ENCODE measurements at regions of chr20 and their contacts with region 1.

Region 1: GRCh38 chr20:45971675-45972499 is at the start of gene ZNF335:
- DNase-seq: peak; percentile 99
- ATAC-seq: peak; percentile 80
- H3K4me3 ChIP-seq: peak within 1 kb of the TSS; percentile 89 to 99 (median 95)
- H3K4me3 Mint-ChIP-seq: peak within 1 kb of the TSS; percentile 93
- H3K27ac ChIP-seq: peak within 1 kb of the TSS; percentile 99 to 100
- H3K27ac Mint-ChIP-seq: peak within 1 kb of the TSS; percentile 100
- H3K4me1 ChIP-seq: peaks cover 23 to 27% of the 10 kb centered on the region in 2 donors
- H3K4me1 Mint-ChIP-seq: peaks cover 24% of the 10 kb centered on the region
- H3K27me3 ChIP-seq: no peaks in the 10 kb centered on the region
- H3K27me3 Mint-ChIP-seq: no peaks in the 10 kb centered on the region
- CTCF ChIP-seq: no peak
- total RNA-seq, gene ZNF335: 62.7 and 64.8 TPM in 2 replicates

Region 2: DNA sequence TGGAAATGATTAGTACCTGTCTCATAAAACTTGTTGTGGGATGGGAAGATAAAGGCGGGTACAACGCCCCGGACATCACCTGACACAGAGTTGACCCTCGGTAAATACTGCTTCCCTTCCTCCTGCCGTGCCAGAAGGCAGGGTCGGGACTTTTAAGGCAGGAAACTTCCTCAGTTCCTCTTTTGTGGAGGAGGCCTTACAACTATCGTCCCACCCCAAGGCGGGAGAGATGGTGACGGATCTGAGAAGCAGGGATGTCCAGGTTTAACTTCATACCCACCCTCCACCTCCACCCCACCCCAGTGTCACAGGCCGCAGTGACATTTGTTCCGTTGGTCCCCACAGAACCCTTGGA is 179.6 kb before region 1 on chr20:
- CTCF ChIA-PET with region 1: interaction called, 4 read pairs
- POLR2A ChIA-PET with region 1: no interaction called
- intact Hi-C with region 1: loop called (anchors 5 kb)
- DNase-seq: peak; percentile 61
- ATAC-seq: peak; percentile 22
- H3K4me3 ChIP-seq: peak overlapping the region; percentile 72 to 95 (median 89)
- H3K4me3 Mint-ChIP-seq: peak overlapping the region; percentile 90
- H3K27ac ChIP-seq: peak overlapping the region; percentile 75 to 96
- H3K27ac Mint-ChIP-seq: peak overlapping the region; percentile 93
- H3K4me1 ChIP-seq: peaks cover 8 to 13% of the 10 kb centered on the region in 2 donors
- H3K4me1 Mint-ChIP-seq: peaks cover 19% of the 10 kb centered on the region
- H3K27me3 ChIP-seq: no peaks in the 10 kb centered on the region
- H3K27me3 Mint-ChIP-seq: no peaks in the 10 kb centered on the region
- CTCF ChIP-seq: no peak

Region 3: DNA sequence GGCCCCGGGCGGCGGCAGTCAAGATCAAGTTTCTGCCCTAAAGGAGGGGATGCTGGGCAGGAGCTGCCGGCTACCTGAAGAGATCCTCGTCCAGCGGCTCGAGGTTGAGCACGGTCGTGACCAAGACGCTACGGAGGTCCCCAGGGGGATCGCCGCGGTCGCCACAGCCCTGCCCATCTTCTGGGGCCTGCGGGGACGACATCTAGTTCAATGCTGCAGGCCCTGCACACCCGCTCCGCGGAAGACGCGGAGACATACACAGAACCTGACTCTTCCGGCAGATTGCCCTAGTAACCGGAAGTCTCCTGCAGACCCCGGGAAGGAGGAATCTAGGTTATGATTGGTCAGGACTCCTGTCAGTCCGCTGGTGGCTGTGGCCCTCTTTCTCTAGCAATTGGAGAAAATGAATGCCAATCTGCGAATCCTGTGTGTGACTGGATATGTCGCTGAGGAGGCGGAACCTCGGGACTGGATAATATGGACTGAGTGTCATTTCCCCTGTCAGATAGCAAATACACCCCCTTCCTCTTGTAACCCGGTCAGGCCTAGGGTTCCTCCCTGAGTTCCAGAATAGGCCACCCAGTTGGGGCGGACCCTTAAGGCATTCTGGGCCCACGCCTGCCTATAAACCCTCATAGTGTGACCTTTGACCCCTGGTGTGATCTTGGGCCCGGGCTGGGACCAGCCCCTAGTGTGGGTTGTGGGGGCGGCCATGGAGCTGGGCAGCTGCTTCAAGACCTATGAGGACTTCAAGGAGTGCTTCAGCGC is 114.6 kb before region 1 on chr20 and contains the starts of genes ACOT8 and ZSWIM3:
- CTCF ChIA-PET with region 1: interaction called, 4 read pairs
- POLR2A ChIA-PET with region 1: no interaction called
- intact Hi-C with region 1: loop called (anchors 1 kb)
- DNase-seq: peak; percentile 99
- ATAC-seq: peak; percentile 98
- H3K4me3 ChIP-seq: peak within 1 kb of the TSS; percentile 69 to 94 (median 81)
- H3K4me3 Mint-ChIP-seq: peak within 1 kb of the TSS; percentile 93
- H3K27ac ChIP-seq: peak within 1 kb of the TSS; percentile 88
- H3K27ac Mint-ChIP-seq: peak within 1 kb of the TSS; percentile 96
- H3K4me1 ChIP-seq: peaks cover 18 to 29% of the 10 kb centered on the region in 2 donors
- H3K4me1 Mint-ChIP-seq: peaks cover 38% of the 10 kb centered on the region
- H3K27me3 ChIP-seq: no peaks in the 10 kb centered on the region
- H3K27me3 Mint-ChIP-seq: no peaks in the 10 kb centered on the region
- CTCF ChIP-seq: no peak
- total RNA-seq, gene ACOT8: 27.1 and 32.4 TPM in 2 replicates
- total RNA-seq, gene ZSWIM3: 7.1 and 7.8 TPM in 2 replicates

Region 4: GRCh38 chr20:45910670-45911485 is 61.0 kb before region 1 on chr20:
- CTCF ChIA-PET with region 1: no interaction called
- POLR2A ChIA-PET with region 1: interaction called, 4 read pairs
- intact Hi-C with region 1: loop called (anchors 1 kb)
- DNase-seq: peak; percentile 95
- ATAC-seq: peak; percentile 93
- H3K4me3 ChIP-seq: peak overlapping the region in 4 of 5 experiments; percentile 37 to 65 (median 60)
- H3K4me3 Mint-ChIP-seq: peak overlapping the region; percentile 94
- H3K27ac ChIP-seq: no peak overlapping the region
- H3K27ac Mint-ChIP-seq: peak overlapping the region; percentile 28
- H3K4me1 ChIP-seq: peaks cover 14 to 22% of the 10 kb centered on the region in 2 donors
- H3K4me1 Mint-ChIP-seq: peaks cover 20% of the 10 kb centered on the region
- H3K27me3 ChIP-seq: peaks cover 0 to 19% (median 9%) of the 10 kb centered on the region in 4 experiments
- H3K27me3 Mint-ChIP-seq: peaks cover 7% of the 10 kb centered on the region
- CTCF ChIP-seq: no peak

Region 5: DNA sequence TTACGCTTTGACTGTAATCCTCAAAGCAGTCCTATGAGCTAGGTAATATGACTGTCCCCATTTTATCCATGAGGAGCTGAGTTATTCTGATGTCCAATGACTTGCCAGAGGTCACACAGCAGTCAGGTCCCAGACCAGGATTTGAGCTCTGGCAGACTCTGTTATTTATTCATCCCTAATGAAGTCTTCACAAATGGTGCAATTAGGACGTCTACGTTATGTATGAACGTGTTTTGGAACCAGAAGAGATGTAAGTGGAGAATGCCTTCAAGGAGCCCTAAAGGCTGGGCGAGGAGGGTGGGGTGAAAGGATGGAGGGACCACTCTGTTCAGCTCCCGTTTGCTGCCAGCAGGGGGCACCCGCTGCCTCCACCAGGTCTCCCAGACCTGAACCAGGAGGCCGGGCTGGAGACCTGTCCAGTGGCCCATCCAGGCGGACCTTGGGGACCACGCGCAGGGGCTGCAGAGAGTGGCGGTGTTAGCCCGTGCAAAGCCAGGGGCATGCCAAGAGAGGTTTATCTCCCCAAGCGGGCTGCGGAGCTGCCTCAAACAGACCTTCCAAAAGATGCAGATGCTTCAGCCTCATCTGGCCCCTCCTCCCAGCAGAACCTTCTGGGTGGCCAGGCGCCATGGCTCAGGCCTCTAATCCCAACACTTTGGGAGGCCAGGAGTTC is 15.4 kb after region 1 on chr20:
- CTCF ChIA-PET with region 1: interaction called, 59 read pairs
- POLR2A ChIA-PET with region 1: interaction called, 4 read pairs
- intact Hi-C with region 1: no loop called
- DNase-seq: peak; percentile 82
- ATAC-seq: peak; percentile 98
- H3K4me3 ChIP-seq: no peak overlapping the region
- H3K4me3 Mint-ChIP-seq: no peak overlapping the region
- H3K27ac ChIP-seq: no peak overlapping the region
- H3K27ac Mint-ChIP-seq: no peak overlapping the region
- H3K4me1 ChIP-seq: peaks cover 4 to 12% of the 10 kb centered on the region in 2 donors
- H3K4me1 Mint-ChIP-seq: peaks cover 6% of the 10 kb centered on the region
- H3K27me3 ChIP-seq: peaks cover 0 to 27% (median 10%) of the 10 kb centered on the region in 4 experiments
- H3K27me3 Mint-ChIP-seq: peaks cover 20% of the 10 kb centered on the region
- CTCF ChIP-seq: peak; percentile 93

Region 6: DNA sequence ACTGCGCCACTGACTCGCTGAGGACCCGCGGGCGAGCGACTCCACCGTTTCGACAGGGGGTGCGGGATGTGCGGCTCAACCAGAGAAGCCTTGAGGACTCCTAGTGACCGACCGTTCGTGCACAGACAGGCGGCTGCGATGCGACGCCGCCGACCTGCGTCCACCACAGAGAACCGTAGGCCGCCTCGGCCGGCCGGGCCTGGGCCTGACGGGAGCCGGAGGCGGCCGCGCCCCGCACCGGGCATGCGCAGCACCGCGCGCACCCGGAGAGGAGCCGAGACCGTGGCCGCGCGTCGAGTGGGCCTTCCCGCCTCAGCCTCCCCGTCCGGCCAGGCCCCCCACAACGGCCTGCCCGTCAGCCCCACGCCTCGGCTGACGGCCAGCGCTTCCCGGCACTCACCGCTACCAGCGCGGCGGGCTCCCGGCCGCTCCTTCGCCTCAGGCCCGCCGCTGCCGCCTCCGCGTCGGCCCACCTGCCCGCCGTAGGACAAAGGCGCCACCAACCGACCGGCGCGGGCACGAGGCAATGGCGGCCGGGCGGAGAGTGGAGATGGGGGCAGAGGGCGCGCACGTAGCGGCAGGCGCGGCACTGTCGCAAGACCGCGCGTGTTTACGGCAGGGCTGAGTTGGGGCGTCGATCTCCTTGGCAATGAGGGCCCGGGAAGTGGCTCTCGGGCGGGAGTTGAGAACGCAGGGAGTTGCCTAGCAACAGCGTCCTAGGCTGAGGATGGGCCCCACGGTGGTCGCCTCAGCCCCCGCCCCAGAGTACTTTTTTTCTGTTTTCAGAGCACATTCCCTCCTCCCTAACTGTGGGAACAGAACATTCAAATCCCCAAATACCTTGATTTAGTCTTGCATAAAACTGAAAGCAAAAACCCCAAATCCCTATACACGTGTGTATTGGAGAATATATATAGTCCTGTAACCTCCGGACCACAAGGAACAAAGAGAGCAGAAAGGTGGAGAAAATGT is 117.8 kb after region 1 on chr20 and contains the start of gene NCOA5:
- CTCF ChIA-PET with region 1: no interaction called
- POLR2A ChIA-PET with region 1: no interaction called
- intact Hi-C with region 1: loop called (anchors 1 kb)
- DNase-seq: peak; percentile 97
- ATAC-seq: peak; percentile 92
- H3K4me3 ChIP-seq: peak within 1 kb of the TSS; percentile 71 to 86 (median 81)
- H3K4me3 Mint-ChIP-seq: peak within 1 kb of the TSS; percentile 93
- H3K27ac ChIP-seq: peak within 1 kb of the TSS; percentile 71 to 94
- H3K27ac Mint-ChIP-seq: peak within 1 kb of the TSS; percentile 90
- H3K4me1 ChIP-seq: peaks cover 21 to 38% of the 10 kb centered on the region in 2 donors
- H3K4me1 Mint-ChIP-seq: peaks cover 47% of the 10 kb centered on the region
- H3K27me3 ChIP-seq: no peaks in the 10 kb centered on the region
- H3K27me3 Mint-ChIP-seq: no peaks in the 10 kb centered on the region
- CTCF ChIP-seq: peak; percentile 32
- total RNA-seq, gene NCOA5: 41.6 and 44.1 TPM in 2 replicates